GM10248 (cell line): ENCODE measurements at regions of chr3 and their contacts with region 1.

Region 1: GRCh38 chr3:172522871-172523818 is at the start of gene TNFSF10:
- DNase-seq: peak; percentile 73
- CTCF ChIP-seq: no peak

Region 2: DNA sequence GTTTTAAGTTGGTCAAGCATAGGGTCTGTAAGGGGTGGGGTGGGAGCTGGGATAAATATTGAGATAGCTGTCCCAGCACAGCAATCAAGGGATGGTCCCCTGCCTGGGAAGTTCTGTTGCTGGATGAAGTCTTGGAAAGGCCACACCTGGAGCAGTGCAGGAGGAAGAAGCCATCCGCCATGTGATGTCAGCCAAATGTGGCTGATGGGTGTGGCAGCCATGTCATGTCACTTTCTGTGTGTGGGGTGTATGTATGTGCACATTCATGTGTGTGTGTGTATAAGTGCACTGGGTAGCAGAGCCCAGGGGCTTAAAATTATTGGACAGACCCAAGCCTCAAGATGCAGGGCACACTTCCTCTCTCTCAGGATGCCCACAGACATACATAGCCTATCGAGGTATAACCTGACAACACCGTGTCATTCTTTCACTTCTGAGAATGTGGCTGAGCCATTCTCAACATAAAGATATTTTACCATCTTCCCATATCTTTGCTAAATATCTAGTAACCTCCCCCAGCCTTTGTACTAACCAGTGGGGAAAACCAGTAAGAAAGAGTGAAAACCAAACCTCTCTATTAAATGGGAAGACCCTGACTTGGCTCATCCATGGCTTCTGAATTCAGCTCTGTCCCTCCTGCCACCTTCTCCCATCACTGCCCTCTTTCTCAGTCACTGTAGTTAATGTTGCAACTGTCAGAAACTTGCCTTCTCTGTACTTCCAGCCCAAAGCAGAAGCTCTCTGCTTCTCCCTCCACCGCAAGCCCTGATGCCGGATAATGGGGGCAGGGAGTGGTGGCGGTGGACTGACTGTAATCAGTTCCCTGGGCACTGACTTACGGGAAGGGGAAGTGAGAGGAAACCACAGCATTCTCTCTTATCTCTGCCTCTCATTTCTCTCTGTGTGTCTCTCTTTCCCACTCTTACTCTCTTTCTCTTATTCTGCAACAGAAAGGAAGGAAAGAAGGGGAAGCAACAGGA is 11.1 kb before region 1 on chr3:
- CTCF ChIA-PET with region 1: interaction called, 12 read pairs
- POLR2A ChIA-PET with region 1: interaction called, 3 read pairs
- DNase-seq: peak; percentile 25
- CTCF ChIP-seq: no peak

Region 3: GRCh38 chr3:172564499-172564898 is 41.4 kb after region 1 on chr3:
- CTCF ChIA-PET with region 1: no interaction called
- POLR2A ChIA-PET with region 1: no interaction called
- DNase-seq: no peak
- CTCF ChIP-seq: no peak